ENCODE measurements at regions of chr1 and their contacts with region 1.

Region 1: DNA sequence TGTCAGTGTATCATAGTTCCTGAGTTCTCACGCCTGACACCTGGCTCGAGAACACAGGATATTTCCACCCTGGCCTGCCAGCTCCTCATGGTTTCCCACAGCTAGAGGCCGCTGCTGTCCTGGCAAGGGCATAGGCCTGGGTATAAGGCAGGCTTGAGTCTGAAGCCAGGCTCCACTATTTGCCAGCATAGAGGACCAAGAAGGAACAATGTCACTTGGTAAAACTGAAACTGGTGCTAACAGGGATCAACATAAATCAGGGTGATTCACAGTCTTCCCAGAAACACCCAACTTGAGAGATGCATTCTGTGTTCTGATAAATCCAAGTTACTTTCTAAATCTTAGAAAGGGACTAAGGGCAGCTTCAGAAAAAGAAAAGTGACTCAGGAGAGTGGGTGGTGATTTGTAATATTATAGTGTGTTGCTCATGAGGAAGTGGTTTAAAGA is 6.9 kb upstream of the S100A2 start:
- DNase-seq: no peak
- H3K4me3 ChIP-seq: no peak overlapping the region
- H3K27me3 ChIP-seq: no peaks in the 10 kb centered on the region
- CTCF ChIP-seq: peak; percentile 94

Region 2: GRCh38 chr1:153494976-153495535 is 77.5 kb before region 1 on chr1:
- CTCF ChIA-PET with region 1: interaction called, 11 read pairs
- POLR2A ChIA-PET with region 1: no interaction called
- DNase-seq: no peak
- H3K4me3 ChIP-seq: no peak overlapping the region
- H3K27me3 ChIP-seq: peaks cover 13% of the 10 kb centered on the region
- CTCF ChIP-seq: peak; percentile 97

Region 3: GRCh38 chr1:153526132-153526543 is 46.5 kb before region 1 on chr1:
- CTCF ChIA-PET with region 1: interaction called, 164 read pairs
- POLR2A ChIA-PET with region 1: no interaction called
- DNase-seq: no peak
- H3K4me3 ChIP-seq: no peak overlapping the region
- H3K27me3 ChIP-seq: no peaks in the 10 kb centered on the region
- CTCF ChIP-seq: no peak

Region 4: DNA sequence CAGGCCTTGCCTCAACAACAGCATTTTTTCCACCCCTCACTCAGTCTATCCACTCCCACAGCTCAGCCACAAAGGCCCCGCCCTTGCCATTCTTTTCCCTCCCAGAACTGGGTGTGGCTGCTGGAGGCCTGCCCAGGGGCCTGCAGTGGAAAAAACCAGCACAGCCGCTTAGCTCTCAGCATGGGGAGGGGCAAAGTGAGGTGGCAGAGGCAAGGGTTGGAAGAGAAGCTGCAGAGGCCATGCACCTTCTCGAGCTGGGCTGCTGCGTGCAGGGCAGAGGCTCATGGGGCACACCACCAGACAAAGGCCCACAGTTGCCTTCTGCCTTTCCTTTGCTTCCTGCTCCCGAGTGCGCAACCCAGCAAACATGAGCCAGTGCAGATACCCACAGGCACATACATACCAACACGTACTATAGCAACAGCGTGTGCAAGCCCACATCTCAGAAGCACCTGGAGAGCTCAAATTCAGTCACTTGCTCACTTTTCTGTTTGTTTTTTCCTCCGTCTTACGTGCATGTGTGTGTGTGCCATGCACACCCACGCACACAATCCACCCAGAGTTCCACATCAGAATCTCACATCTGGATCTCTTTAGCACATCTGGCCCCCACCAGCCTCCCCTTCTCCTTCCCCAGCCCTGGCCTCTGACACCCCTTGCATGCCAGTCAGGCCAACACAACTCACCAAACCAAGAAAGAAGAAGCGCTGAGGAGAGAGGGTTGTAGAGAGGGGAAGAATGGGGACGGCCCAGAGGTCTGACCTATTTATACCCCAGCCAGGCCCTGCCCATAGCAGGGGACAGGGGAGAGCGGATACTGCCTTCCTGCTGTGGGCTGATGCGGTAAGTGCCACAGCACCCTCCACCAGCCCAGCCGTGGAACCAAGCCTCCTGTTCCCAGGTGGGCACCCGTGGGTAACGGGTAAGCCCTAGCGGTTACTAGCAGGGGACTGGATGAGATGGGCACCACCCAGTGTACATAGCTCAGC is 27.2 kb before region 1 on chr1 and contains the start of gene S100A4:
- CTCF ChIA-PET with region 1: interaction called, 14 read pairs
- POLR2A ChIA-PET with region 1: interaction called, 4 read pairs
- DNase-seq: peak; percentile 86
- H3K4me3 ChIP-seq: peak within 1 kb of the TSS; percentile 44
- H3K27me3 ChIP-seq: no peaks in the 10 kb centered on the region
- CTCF ChIP-seq: 0 out of 2 replicates have a peak, but pooled peaks have one; percentile 3
- polyA plus RNA-seq, gene S100A4: 529 and 797 TPM in 2 replicates

Region 5: DNA sequence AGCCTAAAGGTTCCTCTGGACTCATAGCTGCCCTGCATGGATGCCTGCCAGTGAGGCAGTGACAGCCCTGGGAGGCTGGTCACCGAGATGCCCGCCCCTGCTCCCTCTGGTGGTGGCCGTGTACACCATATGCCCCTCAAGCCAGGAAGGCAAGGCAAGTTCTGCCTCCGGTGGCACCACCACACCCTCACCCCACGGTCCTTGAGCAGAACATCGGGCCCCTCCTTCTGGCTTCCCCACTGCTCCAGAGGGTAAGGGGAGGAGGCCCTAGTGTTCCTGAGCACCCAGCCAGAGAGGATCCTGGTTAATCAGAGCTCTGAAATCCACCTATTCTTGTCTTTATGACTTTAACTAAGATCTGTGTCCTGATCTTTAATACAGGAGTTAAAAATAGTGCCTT is 45.1 kb after region 1 on chr1:
- CTCF ChIA-PET with region 1: interaction called, 194 read pairs
- POLR2A ChIA-PET with region 1: no interaction called
- DNase-seq: no peak
- H3K4me3 ChIP-seq: no peak overlapping the region
- H3K27me3 ChIP-seq: no peaks in the 10 kb centered on the region
- CTCF ChIP-seq: peak; percentile 89

Region 6: DNA sequence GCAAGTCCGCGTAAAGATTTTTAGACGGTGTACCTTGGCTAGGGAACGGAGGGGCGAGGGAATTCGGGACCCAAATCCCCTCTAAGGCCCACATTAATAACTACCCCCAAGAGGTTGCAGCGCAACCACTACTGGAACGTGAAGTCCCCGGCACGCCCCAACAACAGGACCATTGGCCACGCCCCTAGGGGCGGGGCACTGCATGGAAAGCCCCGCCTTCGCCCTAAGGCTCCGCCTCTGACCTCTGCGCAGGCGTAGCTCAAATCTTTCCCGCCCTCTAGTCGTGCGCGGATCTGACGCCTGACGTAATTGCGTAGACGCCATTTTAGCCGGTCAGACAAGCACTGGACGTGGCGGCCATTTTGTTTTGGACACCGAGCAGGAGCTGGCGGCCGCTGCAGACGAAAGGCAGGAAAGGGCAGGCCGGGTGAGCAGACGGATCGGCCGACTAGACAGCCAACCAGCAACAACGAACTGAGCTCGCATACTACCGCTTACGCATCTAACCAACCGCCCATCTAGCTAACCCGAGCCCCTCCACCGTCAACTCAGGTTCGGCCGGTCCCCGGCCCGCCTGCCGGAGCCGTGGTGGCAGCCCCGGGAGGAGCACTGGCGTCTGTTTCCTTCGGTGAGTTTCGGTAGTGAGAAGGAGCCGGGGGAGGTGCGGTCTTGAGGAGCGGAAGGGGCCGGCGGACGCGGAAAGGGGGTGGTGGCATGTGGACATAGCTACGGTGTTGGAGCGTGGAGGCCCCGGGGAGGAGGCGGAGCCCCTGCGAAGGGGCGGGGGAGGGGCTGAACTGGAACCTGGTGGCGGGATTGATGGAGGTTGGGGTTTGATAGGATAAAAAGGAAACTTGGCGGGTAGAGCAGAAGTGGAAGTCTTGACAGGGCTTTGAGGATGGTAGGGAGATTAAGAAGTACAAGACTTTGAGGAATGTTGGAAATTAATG is 61.4 kb after region 1 on chr1 and contains the start of gene CHTOP:
- CTCF ChIA-PET with region 1: interaction called, 45 read pairs
- POLR2A ChIA-PET with region 1: no interaction called
- DNase-seq: peak; percentile 88
- H3K4me3 ChIP-seq: peak within 1 kb of the TSS; percentile 80
- H3K27me3 ChIP-seq: no peaks in the 10 kb centered on the region
- CTCF ChIP-seq: no peak; the same call in 1 of the 2 replicates
- polyA plus RNA-seq, gene CHTOP: 36.8 and 38.4 TPM in 2 replicates

Region 7: DNA sequence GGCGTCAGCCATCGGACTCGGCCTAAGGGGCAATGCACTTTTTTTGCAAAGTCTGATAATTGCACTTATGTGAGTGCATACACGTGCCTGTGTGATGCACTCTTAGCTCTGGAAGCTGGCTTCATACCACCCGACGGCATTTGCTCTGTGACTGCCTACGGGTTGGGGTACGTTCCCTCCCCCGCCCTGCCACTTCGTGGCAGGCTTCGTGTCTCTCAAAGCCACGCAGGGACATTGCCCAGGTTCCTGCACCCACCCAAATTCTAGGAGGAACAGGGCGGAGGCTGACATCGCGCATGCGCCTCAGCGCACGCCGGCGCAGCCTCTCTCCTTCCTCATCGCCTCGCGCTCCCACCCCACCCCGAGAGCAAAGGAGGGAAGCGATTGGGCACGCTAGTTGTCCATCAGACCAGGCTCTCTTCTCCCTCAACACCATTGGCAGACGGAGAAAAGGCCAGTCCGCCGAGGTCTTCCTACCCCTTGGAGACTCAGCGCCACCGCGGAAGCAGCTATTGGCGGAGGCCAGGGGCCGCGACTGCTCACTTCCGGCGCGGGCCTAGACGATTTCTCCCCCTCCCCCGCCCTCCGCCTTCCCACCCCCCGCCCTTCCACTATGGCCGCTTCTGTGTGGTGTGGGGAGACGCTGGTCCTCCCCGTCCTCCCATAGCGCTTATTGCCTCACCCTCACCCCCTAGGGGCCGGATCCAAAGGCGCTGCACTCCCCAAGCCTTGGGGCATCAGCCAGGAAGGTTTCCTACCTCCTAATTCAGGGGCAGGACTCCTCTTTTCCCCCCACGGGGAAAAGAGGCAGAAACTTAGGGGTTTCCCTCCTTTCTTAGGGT is 155.1 kb after region 1 on chr1 and contains the start of gene INTS3:
- CTCF ChIA-PET with region 1: no interaction called
- POLR2A ChIA-PET with region 1: no interaction called
- DNase-seq: peak; percentile 99
- H3K4me3 ChIP-seq: peak within 1 kb of the TSS; percentile 62
- H3K27me3 ChIP-seq: no peaks in the 10 kb centered on the region
- CTCF ChIP-seq: peak; percentile 10; the same call in 1 of the 2 replicates
- polyA plus RNA-seq, gene INTS3: 38.8 and 52.8 TPM in 2 replicates